ENCODE measurements at regions of chr2 and their contacts with region 1.

Region 1: GRCh38 chr2:196592912-196593881 is 46.3 kb upstream of the CCDC150 start:
- DNase-seq: peak in 1 of 2 experiments; percentile 77
- H3K4me3 ChIP-seq: peak within 1 kb of the TSS; percentile 63 to 81 (median 72)
- H3K27ac ChIP-seq: no peak within 1 kb of the TSS
- H3K4me1 ChIP-seq: peaks cover 0 to 3% (median 1%) of the 10 kb centered on the region in 4 experiments; a peak in 3 of 7 replicates
- H3K27me3 ChIP-seq: peaks cover 4 to 25% (median 17%) of the 10 kb centered on the region in 4 experiments
- CTCF ChIP-seq: peak in 1 of 3 experiments; percentile 16; a peak in 1 of 4 replicates
- EP300 ChIP-seq: no peak
- POLR2A ChIP-seq: peak; percentile 66 to 79
- RAD21 ChIP-seq: peak in 1 of 2 experiments; percentile 2; a peak in 1 of 4 replicates

Region 2: DNA sequence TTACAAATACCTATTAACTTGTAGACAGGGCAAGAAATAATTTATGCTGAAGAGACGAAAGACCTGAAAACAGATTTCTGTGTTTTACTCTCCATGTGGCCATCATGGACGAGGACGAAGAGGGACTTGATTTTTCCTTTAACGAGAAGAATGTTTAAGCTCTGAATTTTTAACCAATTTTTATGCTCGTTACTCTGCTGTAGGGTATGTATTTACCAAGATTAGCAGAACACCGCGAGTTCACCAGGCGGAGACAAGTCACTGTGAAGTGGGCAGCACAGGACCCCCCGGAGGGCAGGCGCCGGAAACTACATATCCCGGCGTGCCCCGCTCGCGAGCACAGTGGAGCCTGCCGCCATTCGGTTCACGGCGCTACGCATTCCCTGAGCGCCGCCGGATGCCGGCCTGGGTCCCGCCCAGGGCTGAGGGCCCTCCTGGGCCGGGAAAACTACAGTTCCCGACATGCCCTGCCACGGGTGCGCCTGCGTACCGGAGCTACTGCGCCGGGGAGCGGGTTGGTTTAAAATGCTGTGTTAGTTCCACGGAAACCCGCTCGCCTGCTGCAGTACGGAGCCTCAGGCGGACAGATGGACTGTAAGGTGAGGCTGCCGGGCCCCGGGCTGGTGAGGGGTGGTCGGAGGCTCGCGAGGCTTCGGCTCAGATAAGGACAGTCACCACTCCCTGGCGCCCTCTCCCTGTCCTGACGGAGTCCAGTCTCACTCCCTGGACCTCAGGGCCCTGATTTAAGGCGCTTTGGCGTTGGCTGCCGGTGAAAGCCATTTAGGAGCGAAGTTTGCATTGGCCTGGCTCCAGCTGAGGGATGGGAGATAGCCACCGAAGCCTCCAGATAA is 46.2 kb after region 1 on chr2 and contains the start of gene CCDC150:
- CTCF ChIA-PET with region 1: no interaction called
- POLR2A ChIA-PET with region 1: interaction called, 10 read pairs
- DNase-seq: peak; percentile 84 to 95
- H3K4me3 ChIP-seq: peak within 1 kb of the TSS; percentile 72 to 94 (median 77)
- H3K27ac ChIP-seq: peak within 1 kb of the TSS; percentile 65; the same call in 1 of the 2 replicates
- H3K4me1 ChIP-seq: peaks cover 0 to 8% (median 3%) of the 10 kb centered on the region in 4 experiments; a peak in 3 of 7 replicates
- H3K27me3 ChIP-seq: no peaks in the 10 kb centered on the region
- CTCF ChIP-seq: peak; percentile 19 to 45 (median 33)
- EP300 ChIP-seq: peak in 1 of 2 experiments; percentile 28; a peak in 1 of 3 replicates
- POLR2A ChIP-seq: peak; percentile 56 to 93
- RAD21 ChIP-seq: peak; percentile 21 to 24; a peak in 3 of 4 replicates
- total RNA-seq, gene CCDC150: 31.9 and 42.2 TPM in 2 replicates